Aorta (tissue), 5 donors: ENCODE measurements at regions of chr7 and their contacts with region 1.

Region 1: DNA sequence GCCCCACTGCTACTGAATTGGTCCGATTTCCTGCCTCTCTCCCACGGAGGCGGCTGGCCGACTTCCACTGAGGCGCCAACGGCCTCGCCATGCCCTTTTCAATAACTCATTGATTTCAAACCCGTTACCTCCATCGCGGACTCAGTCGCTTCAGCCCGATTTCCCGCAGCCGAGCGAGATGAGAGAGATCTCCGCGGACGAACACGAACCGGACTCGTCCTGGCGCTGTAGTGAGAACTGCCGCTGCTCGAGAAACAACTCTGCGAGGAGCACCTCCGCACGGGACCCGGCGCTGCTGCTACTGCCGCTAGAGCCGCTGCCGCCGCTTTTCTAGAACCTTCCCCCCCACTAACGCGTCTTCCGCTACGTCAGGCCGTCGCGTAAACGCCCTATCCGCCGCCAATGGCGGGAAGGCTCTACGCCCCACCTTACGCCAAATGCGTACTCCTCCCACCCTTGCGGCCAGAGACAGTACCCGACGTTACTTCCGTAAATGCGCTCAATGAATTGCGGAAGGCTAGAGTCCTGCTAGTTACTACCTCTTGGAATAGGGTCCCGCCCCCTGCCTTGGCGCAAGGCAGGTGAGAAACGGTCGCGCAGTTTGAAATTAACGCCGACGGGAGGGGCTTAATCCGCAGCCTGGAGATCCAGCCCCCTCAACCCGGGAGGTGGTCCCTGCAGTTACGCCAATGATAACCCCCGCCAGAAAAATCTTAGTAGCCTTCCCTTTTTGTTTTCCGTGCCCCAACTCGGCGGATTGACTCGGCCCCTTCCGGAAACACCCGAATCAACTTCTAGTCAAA is at the start of gene HNRNPA2B1:
- DNase-seq: peak; percentile 98 to 99
- ATAC-seq: peak; percentile 95
- H3K4me3 ChIP-seq: peak within 1 kb of the TSS; percentile 95 to 98
- H3K27ac ChIP-seq: peak within 1 kb of the TSS; percentile 90 to 100
- H3K4me1 ChIP-seq: peaks cover 0 to 6% of the 10 kb centered on the region in 2 donors
- H3K27me3 ChIP-seq: no peaks in the 10 kb centered on the region
- total RNA-seq, gene HNRNPA2B1: 332 to 354 TPM

Region 2: DNA sequence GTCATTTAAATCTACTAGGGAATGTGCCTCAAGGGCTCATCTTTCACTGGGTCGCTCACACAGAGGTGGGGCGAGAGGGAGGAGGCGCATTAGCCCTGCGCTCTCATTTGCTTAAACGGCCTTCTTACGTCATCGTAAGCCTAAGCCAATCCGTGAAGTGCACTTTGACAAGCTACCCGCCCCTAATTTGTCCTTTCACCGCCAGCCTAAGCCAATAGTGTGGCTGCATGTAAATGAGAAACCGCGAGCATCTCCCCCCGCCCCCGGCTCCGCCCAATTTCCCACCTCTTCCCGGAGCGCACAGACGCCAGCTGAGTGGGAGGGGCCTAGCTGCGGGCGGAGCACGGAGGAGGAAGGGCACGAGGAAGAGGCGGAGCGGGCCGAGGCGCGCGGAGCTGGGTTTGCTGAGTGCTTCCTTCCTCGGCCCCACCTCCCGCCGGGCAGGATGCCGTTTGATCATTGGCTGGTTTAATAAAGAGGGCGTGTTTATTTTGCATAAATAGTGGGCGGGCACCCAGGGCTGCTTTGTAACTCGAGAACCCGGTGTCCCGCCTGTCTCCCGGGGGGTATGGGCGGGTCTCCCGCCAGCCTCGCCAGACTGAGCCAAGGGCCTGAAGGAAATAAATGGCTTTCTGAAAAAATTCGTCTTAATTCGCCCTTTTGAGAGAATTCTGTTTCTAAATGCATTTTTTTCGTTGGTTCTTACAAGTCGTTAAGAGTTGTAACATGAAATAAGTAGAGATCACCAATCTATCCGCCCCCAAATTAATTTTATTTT is 338.2 kb before region 1 on chr7:
- intact Hi-C with region 1: loop called in 1 of 2 experiments (anchors 1 kb)
- DNase-seq: peak; percentile 95 to 100
- ATAC-seq: peak; percentile 97
- H3K4me3 ChIP-seq: no peak overlapping the region
- H3K27ac ChIP-seq: no peak overlapping the region
- H3K4me1 ChIP-seq: no peaks in the 10 kb centered on the region
- H3K27me3 ChIP-seq: peaks cover 0 to 4% of the 10 kb centered on the region in 2 donors

Region 3: GRCh38 chr7:27150568-27151340 is 950.1 kb after region 1 on chr7:
- intact Hi-C with region 1: loop called in 1 of 2 experiments (anchors 10 kb)
- DNase-seq: peak; percentile 84 to 93
- ATAC-seq: peak; percentile 81
- H3K4me3 ChIP-seq: peak overlapping the region; percentile 7 to 33
- H3K27ac ChIP-seq: peak overlapping the region in 1 of 2 donors; percentile 65
- H3K4me1 ChIP-seq: peaks cover 0 to 2% of the 10 kb centered on the region in 2 donors
- H3K27me3 ChIP-seq: no peaks in the 10 kb centered on the region

Region 4: DNA sequence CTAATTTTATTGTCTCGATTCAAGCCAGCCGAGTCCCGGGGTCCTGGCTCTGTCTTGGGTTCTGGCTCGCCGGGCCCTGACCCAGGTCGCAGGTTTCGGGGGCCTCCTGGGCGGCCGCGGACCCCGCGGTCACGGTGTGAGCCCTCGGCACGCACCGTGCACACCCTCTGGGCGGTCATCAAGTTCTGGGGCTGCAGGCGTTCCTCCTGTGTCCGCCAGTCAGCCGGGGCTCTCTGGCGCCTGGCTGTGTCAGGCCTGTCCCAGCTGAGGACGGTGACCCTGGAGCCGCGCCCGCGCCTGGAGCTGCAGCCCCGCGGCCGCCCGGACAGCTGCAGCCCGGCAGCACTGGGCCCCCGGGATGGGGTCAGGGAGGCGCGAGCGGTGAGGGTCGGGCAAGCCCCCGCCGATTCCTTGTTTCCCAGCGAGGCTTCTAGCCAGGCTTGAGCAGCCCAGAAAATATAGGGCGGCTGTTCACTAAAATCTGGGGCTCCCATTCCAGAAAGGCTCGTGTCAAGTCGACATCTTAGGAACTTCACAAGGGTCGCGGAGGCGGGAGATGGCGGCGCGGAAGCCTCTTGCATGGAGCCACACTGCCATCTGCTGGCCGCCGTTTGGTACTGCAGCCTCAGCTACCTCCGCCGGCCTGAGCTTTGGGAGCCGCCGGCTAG is 960.0 kb after region 1 on chr7:
- intact Hi-C with region 1: loop called (anchors 10 kb)
- DNase-seq: peak; percentile 90 to 96
- ATAC-seq: peak; percentile 84
- H3K4me3 ChIP-seq: peak overlapping the region; percentile 33 to 45
- H3K27ac ChIP-seq: no peak overlapping the region
- H3K4me1 ChIP-seq: no peaks in the 10 kb centered on the region
- H3K27me3 ChIP-seq: no peaks in the 10 kb centered on the region